IMR-90 (cell line): ENCODE measurements at regions of chr17 and their contacts with region 1.

Region 1: DNA sequence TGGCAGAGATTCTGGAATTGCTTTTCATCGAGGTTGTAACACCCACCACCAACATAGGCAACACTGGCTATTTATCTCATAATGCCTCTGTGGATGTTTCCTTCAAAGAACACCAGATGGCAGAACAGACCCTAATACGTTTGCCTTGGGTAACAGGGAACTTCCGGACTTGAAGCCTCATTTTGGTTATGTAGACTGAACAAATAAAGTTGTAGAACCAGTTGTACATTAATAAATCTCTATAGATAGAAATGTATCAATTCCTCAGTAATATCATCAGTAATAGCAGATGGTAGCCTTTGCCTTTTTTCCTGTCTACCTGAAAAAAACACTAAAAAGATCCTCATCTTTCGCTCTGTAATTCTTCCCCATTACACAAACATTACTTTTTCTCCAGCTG is 25.9 kb upstream of the APOH start:
- DNase-seq: peak; percentile 83
- ATAC-seq: peak; percentile 94
- H3K4me3 ChIP-seq: no peak overlapping the region
- H3K27ac ChIP-seq: no peak overlapping the region
- H3K4me1 ChIP-seq: no peaks in the 10 kb centered on the region
- H3K27me3 ChIP-seq: no peaks in the 10 kb centered on the region
- CTCF ChIP-seq: peak; percentile 90
- POLR2A ChIP-seq: peak; percentile 43; the same call in 1 of the 2 replicates
- RAD21 ChIP-seq: peak; percentile 94

Region 2: GRCh38 chr17:66567234-66568170 is 312.4 kb after region 1 on chr17:
- CTCF ChIA-PET with region 1: interaction called, 8 read pairs
- POLR2A ChIA-PET with region 1: no interaction called
- dilution Hi-C with region 1: no loop called
- in situ Hi-C with region 1: no loop called
- intact Hi-C with region 1: loop called (anchors 1 kb)
- DNase-seq: peak; percentile 88
- ATAC-seq: peak; percentile 86
- H3K4me3 ChIP-seq: no peak overlapping the region
- H3K27ac ChIP-seq: peak overlapping the region; percentile 93
- H3K4me1 ChIP-seq: peaks cover 22% of the 10 kb centered on the region
- H3K27me3 ChIP-seq: no peaks in the 10 kb centered on the region
- CTCF ChIP-seq: peak; percentile 89
- POLR2A ChIP-seq: no peak
- RAD21 ChIP-seq: peak; percentile 92

Region 3: DNA sequence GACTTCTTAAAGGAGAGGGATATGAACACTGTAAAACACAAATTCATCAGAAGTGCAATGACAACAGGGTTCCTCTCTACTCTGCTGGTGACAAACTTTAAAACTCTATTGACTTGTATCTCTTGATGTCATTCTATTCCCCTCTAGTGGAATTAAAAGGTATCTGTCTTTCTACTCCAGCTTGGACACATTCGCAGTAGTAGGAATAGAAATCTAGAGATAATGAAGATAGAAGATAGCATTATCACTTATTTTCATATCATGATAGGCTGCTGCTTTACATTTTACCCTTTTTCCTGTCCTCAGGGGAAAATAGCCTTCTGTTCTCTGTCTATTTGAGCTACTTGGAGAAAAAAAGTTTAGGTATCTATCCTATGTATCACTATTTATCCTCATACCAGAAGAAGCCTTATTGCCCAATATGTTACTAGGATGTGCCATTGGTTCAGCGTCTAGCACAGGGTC is 370.2 kb after region 1 on chr17:
- CTCF ChIA-PET with region 1: no interaction called
- POLR2A ChIA-PET with region 1: no interaction called
- dilution Hi-C with region 1: no loop called
- in situ Hi-C with region 1: no loop called
- intact Hi-C with region 1: loop called (anchors 1 kb)
- DNase-seq: peak; percentile 49
- ATAC-seq: peak; percentile 77
- H3K4me3 ChIP-seq: no peak overlapping the region
- H3K27ac ChIP-seq: no peak overlapping the region
- H3K4me1 ChIP-seq: no peaks in the 10 kb centered on the region
- H3K27me3 ChIP-seq: no peaks in the 10 kb centered on the region
- CTCF ChIP-seq: peak; percentile 58
- POLR2A ChIP-seq: no peak
- RAD21 ChIP-seq: peak; percentile 67

Region 4: DNA sequence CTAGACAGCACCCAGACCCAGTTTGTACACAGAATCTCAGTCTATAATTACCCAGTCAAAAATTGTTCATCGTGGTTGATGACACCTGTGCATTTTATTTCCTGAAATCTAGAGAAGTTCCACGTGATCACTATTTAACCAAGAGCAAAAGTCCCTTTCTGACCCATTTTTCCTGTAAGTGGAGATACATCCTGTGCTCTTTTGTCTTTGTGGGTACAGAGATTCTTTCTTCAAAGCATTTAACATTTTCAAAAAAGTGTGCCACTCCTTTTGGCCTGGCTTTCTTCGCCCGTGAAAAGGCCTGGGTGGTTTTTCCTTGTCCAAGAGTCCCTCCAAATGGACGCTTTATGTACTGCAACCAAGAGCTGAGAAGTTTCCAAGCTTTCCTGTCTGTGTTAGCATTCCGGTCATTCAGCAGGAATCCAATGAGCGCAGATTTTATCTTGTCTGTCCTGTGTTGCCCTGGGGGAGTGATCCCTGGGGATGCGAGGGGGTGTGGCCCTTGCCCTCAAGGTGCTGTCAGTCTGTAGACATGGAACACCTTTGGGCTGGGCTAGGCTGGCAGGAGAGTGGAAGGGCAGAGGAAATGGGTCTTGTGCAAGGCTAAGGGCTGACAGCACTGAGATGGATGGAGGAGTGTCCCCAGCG is 418.7 kb after region 1 on chr17:
- CTCF ChIA-PET with region 1: no interaction called
- POLR2A ChIA-PET with region 1: no interaction called
- dilution Hi-C with region 1: no loop called
- in situ Hi-C with region 1: loop called (anchors 5 kb)
- intact Hi-C with region 1: loop called (anchors 1 kb)
- DNase-seq: peak; percentile 72
- ATAC-seq: peak; percentile 94
- H3K4me3 ChIP-seq: no peak overlapping the region
- H3K27ac ChIP-seq: no peak overlapping the region
- H3K4me1 ChIP-seq: peaks cover 4% of the 10 kb centered on the region
- H3K27me3 ChIP-seq: no peaks in the 10 kb centered on the region
- CTCF ChIP-seq: peak; percentile 82
- POLR2A ChIP-seq: no peak
- RAD21 ChIP-seq: peak; percentile 92